ENCODE measurements at regions of chr1 and their contacts with region 1.

Region 1: GRCh38 chr1:203069030-203069747 is 16.6 kb downstream of the MYOG start:
- DNase-seq: no peak
- H3K4me3 Mint-ChIP-seq: no peak overlapping the region
- H3K27ac Mint-ChIP-seq: no peak overlapping the region
- H3K4me1 Mint-ChIP-seq: peaks cover 20% of the 10 kb centered on the region
- H3K27me3 Mint-ChIP-seq: peaks cover 10% of the 10 kb centered on the region
- CTCF ChIP-seq: no peak

Region 2: DNA sequence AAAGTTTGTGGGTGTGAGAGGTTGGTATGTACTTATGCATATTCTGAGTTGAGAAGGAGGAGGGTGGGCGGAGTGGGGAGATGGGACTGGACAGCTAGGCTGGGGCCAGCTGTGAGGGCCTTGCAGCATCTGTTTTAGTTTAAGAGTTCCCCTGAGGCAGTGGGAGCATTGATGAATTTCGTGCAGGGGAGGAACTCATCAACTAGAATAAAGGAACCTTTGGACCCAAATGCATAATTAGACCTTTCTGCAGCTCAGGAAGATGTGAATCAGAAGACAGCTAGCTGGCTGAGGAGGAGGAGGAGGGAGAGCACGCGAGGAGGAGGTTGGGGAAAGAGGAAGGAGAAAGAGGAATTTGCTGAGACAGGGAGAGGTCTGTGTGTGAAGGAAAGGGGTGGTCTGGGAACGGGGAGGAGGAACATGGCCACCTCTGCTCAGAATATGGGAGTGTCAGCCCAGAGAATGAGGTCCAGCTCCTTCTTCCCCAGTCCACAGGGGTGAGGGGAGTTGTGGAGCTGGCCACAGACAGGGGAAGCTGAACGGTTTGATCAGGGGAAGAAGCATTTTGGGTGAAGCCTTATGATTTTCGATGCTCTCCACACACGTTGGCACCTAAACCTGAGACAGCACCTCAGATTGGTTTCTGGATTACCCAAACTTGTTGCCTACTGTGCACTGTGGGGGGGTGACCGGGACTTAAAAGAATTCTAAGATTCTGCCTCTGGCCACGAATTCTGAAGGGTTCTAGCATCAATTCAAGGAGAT is 11.1 kb before region 1 on chr1:
- CTCF ChIA-PET with region 1: interaction called, 15 read pairs
- POLR2A ChIA-PET with region 1: interaction called, 4 read pairs
- intact Hi-C with region 1: no loop called
- DNase-seq: no peak
- H3K4me3 Mint-ChIP-seq: no peak overlapping the region
- H3K27ac Mint-ChIP-seq: no peak overlapping the region
- H3K4me1 Mint-ChIP-seq: no peaks in the 10 kb centered on the region
- H3K27me3 Mint-ChIP-seq: peaks cover 21% of the 10 kb centered on the region
- CTCF ChIP-seq: no peak

Region 3: DNA sequence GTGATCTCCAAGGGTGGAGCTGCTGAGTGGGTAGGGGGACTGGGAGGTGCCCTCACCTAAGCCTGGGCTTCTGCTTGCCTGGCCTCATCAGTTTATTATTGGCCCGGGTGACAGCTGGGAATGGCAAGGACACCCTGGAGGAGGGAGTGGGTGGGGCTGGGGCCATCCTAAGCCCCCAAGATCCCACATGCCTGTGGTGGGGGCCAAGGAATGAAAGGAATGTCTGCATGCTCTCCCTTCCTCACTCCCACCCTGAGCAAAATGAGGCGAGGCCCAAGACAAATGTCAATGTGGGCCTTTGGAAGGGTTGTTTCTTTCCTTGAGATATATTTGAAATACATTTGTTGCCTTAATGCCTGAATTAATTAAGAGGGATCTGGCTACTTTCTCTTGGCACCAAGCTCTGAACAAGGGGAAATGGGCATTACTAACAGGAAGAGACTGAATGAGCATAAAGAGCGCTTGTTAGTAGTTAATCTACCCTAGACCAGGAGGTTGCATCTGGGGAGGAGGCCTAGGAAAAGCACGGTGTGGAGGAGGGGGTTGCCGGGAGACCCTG is 137.0 kb after region 1 on chr1:
- CTCF ChIA-PET with region 1: no interaction called
- POLR2A ChIA-PET with region 1: no interaction called
- intact Hi-C with region 1: no loop called
- DNase-seq: no peak
- H3K4me3 Mint-ChIP-seq: no peak overlapping the region
- H3K27ac Mint-ChIP-seq: no peak overlapping the region
- H3K4me1 Mint-ChIP-seq: peaks cover 9% of the 10 kb centered on the region
- H3K27me3 Mint-ChIP-seq: peaks cover 11% of the 10 kb centered on the region
- CTCF ChIP-seq: no peak